B cell (primary cell): ENCODE measurements at regions of chr11 and their contacts with region 1.

Region 1: DNA sequence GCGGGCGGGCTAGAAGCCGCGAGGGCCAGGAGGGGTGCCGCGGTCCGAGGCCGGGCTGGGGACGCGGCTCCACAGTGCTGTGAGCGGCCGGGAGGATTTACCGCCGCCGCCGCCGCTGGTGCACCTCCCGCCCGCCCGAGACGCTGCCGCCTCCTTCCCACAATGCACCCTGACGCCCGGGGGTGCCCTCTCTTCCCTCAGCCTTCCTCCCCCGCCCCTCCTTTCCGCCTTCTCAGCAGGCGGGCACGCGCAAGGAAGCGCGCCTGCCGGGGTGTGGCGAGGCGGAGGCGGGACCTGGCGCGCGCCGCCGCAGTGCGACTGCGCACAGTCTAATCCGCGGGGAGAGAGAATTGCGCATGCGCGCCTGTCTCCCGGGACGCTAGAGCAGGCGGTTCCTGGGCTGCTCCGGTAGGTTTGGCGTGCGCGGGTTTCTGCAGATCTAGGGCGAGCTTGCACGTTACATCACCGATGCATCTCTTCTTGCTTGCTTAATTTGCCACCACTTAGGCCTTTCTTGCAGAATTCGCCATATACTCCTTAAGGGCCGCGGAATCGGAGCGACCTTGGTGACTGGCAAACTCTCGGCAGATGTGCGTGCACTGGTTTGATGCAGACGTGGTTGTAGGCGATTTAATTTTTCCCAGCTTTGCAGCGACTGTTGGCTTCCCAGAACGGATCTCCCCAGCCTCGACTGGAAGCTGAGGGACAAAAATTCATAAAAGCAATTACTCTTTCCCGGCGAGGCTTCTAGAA is at the starts of genes GVQW3 and THAP12:
- DNase-seq: peak; percentile 99
- ATAC-seq: peak; percentile 88
- H3K4me3 ChIP-seq: peak within 1 kb of the TSS; percentile 61 to 98 (median 73)
- H3K4me3 Mint-ChIP-seq: peak within 1 kb of the TSS; percentile 98
- H3K27ac ChIP-seq: peak within 1 kb of the TSS in 1 of 2 donors; percentile 82
- H3K27ac Mint-ChIP-seq: peak within 1 kb of the TSS; percentile 94
- H3K4me1 ChIP-seq: peaks cover 34 to 39% of the 10 kb centered on the region in 2 donors
- H3K4me1 Mint-ChIP-seq: peaks cover 74% of the 10 kb centered on the region
- H3K27me3 ChIP-seq: no peaks in the 10 kb centered on the region
- H3K27me3 Mint-ChIP-seq: no peaks in the 10 kb centered on the region
- CTCF ChIP-seq: no peak
- total RNA-seq, gene GVQW3: 8.2 TPM in 2 replicates
- total RNA-seq, gene THAP12: 52.9 and 55.6 TPM in 2 replicates

Region 2: GRCh38 chr11:74988541-74989260 is 1392.4 kb before region 1 on chr11 and contains the start of gene NEU3:
- CTCF ChIA-PET with region 1: no interaction called
- POLR2A ChIA-PET with region 1: no interaction called
- intact Hi-C with region 1: loop called (anchors 5 kb)
- DNase-seq: peak; percentile 88
- ATAC-seq: peak; percentile 98
- H3K4me3 ChIP-seq: peak within 1 kb of the TSS; percentile 66 to 99 (median 88)
- H3K4me3 Mint-ChIP-seq: peak within 1 kb of the TSS; percentile 95
- H3K27ac ChIP-seq: peak within 1 kb of the TSS; percentile 67 to 93
- H3K27ac Mint-ChIP-seq: peak within 1 kb of the TSS; percentile 82
- H3K4me1 ChIP-seq: peaks cover 12 to 28% of the 10 kb centered on the region in 2 donors
- H3K4me1 Mint-ChIP-seq: peaks cover 40% of the 10 kb centered on the region
- H3K27me3 ChIP-seq: no peaks in the 10 kb centered on the region
- H3K27me3 Mint-ChIP-seq: no peaks in the 10 kb centered on the region
- CTCF ChIP-seq: no peak
- total RNA-seq, gene NEU3: 15.2 and 17.0 TPM in 2 replicates

Region 3: DNA sequence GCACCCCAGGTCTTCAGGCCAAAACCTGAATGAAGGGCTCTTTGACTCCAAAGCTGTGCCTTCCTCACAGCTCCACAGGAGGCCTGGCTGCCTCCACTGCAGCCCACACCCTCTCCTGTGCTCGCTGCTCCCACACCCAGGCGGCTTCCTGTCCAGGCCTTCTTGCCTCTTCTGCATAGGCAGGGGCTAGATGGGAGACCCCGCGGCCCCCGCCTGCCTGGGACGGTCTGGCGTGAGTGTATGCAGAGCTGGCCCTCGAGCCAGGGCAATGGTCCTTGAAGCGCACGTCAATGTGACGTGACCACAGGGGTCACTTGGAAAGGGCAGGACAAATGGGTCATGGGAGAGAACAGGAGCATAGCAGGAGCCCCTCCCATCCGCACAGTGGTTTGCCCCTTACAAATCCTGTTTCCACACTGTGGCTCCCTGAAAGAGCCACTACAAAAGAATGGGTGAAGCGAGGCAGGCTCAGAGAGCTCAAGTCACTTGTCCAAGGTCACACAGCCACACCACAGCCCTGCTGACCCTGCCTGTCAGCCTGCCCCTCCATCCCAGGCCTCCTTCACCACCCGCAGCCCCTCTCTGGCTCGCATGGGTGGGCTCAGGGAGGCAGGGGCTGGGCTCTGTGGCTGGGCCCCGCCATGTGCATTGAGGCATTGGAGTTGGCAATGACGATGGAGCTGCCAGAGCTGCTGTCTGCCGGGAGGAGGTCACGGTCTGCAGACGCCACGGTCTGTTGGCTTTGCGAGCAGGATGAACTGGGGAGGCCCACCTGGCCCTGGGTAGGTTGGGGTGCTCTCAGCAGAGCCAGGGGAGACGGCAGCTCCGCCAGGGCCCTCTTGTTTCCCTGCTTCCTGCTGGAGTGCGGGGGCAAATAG is 103.6 kb before region 1 on chr11:
- CTCF ChIA-PET with region 1: no interaction called
- POLR2A ChIA-PET with region 1: no interaction called
- intact Hi-C with region 1: no loop called
- DNase-seq: peak; percentile 16
- ATAC-seq: no peak
- H3K4me3 ChIP-seq: no peak overlapping the region
- H3K4me3 Mint-ChIP-seq: no peak overlapping the region
- H3K27ac ChIP-seq: no peak overlapping the region
- H3K27ac Mint-ChIP-seq: no peak overlapping the region
- H3K4me1 ChIP-seq: peaks cover 3 to 7% of the 10 kb centered on the region in 2 donors
- H3K4me1 Mint-ChIP-seq: peaks cover 5% of the 10 kb centered on the region
- H3K27me3 ChIP-seq: no peaks in the 10 kb centered on the region
- H3K27me3 Mint-ChIP-seq: no peaks in the 10 kb centered on the region
- CTCF ChIP-seq: no peak

Region 4: GRCh38 chr11:76444384-76445123 is 63.4 kb after region 1 on chr11 and contains the start of gene EMSY:
- CTCF ChIA-PET with region 1: no interaction called
- POLR2A ChIA-PET with region 1: no interaction called
- intact Hi-C with region 1: loop called (anchors 1 kb)
- DNase-seq: peak; percentile 96
- ATAC-seq: peak; percentile 97
- H3K4me3 ChIP-seq: peak within 1 kb of the TSS; percentile 87 to 99 (median 97)
- H3K4me3 Mint-ChIP-seq: peak within 1 kb of the TSS; percentile 96
- H3K27ac ChIP-seq: peak within 1 kb of the TSS; percentile 80 to 86
- H3K27ac Mint-ChIP-seq: peak within 1 kb of the TSS; percentile 98
- H3K4me1 ChIP-seq: peaks cover 19 to 23% of the 10 kb centered on the region in 2 donors
- H3K4me1 Mint-ChIP-seq: peaks cover 35% of the 10 kb centered on the region
- H3K27me3 ChIP-seq: no peaks in the 10 kb centered on the region
- H3K27me3 Mint-ChIP-seq: no peaks in the 10 kb centered on the region
- CTCF ChIP-seq: no peak
- total RNA-seq, gene EMSY: 54.0 and 59.7 TPM in 2 replicates

Region 5: DNA sequence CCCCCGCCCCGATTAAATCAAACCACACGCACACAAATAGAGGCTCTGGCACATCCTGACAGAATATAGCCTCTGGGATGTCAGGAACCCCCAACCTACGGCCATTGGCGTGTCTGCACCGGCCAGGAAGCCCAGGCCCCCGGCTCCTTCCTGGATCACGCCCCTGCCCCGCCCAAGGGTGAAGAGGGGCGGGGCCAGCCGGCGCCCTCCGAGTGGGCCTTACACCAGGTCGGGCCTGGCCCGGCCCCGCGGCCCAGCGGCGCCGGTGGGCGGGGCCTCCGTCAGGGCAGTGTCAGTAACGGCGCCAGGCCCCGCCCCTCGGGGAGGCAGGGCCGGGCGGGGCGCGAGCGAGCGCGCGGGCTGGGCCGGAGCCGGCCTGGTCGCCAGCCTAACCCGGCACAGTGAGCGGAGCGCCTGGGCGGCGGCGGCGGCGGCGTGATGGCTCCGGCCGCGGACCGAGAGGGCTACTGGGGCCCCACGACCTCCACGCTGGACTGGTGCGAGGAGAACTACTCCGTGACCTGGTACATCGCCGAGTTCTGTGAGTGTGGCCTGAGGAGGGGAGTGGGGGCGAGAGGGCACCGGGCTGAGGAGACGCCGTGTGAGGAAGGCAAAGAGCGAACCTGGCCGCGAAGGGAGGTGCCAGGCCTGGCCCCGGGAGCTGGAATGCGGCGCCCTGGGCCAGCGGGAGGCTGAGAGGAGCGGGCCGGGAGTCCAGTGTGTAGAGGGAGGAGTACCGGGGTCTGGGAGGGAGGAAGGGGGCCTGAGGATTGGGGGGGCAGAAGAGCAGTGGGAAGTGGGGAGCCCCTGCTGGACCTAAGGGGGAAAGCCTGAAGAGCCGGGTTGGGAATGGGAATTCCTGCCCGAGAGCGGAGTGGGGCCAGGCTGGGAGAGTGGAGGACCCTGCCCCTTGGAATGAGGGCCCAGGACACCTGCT is 479.7 kb after region 1 on chr11 and contains the start of gene ACER3:
- CTCF ChIA-PET with region 1: no interaction called
- POLR2A ChIA-PET with region 1: no interaction called
- intact Hi-C with region 1: loop called (anchors 10 kb)
- DNase-seq: peak; percentile 90
- ATAC-seq: peak; percentile 99
- H3K4me3 ChIP-seq: peak within 1 kb of the TSS; percentile 32 to 81 (median 80)
- H3K4me3 Mint-ChIP-seq: peak within 1 kb of the TSS; percentile 92
- H3K27ac ChIP-seq: peak within 1 kb of the TSS; percentile 69 to 87
- H3K27ac Mint-ChIP-seq: peak within 1 kb of the TSS; percentile 81
- H3K4me1 ChIP-seq: peaks cover 19 to 22% of the 10 kb centered on the region in 2 donors
- H3K4me1 Mint-ChIP-seq: peaks cover 28% of the 10 kb centered on the region
- H3K27me3 ChIP-seq: no peaks in the 10 kb centered on the region
- H3K27me3 Mint-ChIP-seq: no peaks in the 10 kb centered on the region
- CTCF ChIP-seq: no peak
- total RNA-seq, gene ACER3: 11.3 and 12.9 TPM in 2 replicates